Mammary epithelial cell (primary cell): ENCODE measurements at regions of chr6 and their contacts with region 1.

Region 1: DNA sequence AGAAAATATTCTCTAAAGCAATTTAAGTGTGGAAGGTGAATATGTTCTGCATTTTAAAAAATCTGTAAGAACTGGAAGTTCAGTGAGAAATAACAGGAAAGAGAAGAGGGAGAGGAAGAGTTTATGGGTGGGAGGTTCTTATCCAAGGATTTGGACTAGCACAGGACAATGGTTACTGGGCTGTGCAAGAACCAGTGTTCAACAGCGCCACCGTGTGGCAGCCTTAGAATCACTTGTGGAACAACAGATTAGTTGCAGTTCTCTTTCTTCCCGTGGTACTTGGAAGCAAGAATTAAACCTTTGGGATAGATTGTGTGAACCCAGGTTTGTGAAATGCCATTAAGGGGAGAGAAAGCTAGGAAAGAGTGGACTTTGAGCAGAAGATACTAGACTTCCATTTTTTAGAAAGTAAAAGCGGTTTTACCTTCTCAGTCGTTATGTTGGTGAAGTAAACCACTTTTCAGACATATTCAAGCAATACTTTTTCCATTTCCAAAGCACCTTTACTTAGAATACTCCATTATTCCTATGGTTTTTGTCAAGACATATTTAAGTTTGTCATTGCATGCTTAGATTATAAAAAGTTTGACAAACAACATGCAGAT is 436.7 kb downstream of the RNF144B start:
- DNase-seq: peak; percentile 28
- H3K4me3 ChIP-seq: no peak overlapping the region
- H3K27ac ChIP-seq: no peak overlapping the region
- H3K4me1 ChIP-seq: no peaks in the 10 kb centered on the region
- H3K27me3 ChIP-seq: no peaks in the 10 kb centered on the region
- CTCF ChIP-seq: peak; percentile 63 to 67

Region 2: DNA sequence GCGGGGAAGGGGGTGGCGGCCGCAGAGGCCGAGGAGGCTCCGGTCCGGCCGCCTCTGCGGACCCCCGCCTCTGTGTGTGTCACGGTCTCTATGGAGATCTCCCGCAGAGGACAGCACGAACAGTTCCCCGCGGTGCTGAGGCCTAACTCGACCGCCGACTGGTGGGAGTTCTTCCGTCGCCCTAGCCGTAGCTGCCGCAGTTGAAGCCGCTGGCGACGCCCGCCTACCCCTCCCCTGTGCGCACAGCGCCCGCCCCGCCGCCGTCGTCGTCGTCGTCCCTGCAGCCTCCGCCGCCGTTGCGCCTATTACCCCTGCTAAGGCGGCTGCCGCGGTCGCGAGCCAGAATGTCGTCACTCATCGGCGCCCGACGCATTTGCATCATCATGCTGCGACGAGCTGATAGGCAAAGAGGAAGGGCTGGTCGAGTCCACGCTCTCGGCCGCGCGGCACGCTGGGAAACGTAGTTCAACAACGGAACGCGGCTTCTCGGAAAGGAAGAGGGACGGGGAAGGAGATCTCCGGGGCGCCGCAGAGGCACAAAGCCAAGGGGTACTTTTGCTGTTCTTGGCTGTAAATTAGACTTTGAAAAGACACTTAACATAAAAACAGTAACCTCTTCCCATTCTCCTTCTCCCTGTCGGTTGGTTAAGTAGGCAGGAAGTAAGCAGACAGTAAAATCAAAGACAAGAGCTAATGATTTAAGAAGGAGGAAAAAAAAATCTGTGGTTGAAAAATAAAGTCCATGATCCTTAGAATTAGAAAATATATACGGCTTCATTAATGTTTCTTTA is 1117.1 kb before region 1 on chr6 and contains the start of gene NUP153:
- CTCF ChIA-PET with region 1: no interaction called
- dilution Hi-C with region 1: no loop called
- in situ Hi-C with region 1: no loop called
- intact Hi-C with region 1: no loop called
- DNase-seq: peak; percentile 98
- H3K4me3 ChIP-seq: peak within 1 kb of the TSS; percentile 91 to 96 (median 92)
- H3K27ac ChIP-seq: peak within 1 kb of the TSS; percentile 96
- H3K4me1 ChIP-seq: peaks cover 27% of the 10 kb centered on the region
- H3K27me3 ChIP-seq: no peaks in the 10 kb centered on the region
- CTCF ChIP-seq: no peak
- total RNA-seq, gene NUP153: 32.3 to 34.8 TPM

Region 3: GRCh38 chr6:18527836-18528743 is 295.8 kb before region 1 on chr6:
- CTCF ChIA-PET with region 1: no interaction called
- dilution Hi-C with region 1: no loop called
- in situ Hi-C with region 1: no loop called
- intact Hi-C with region 1: loop called (anchors 5 kb)
- DNase-seq: no peak
- H3K4me3 ChIP-seq: no peak overlapping the region
- H3K27ac ChIP-seq: no peak overlapping the region
- H3K4me1 ChIP-seq: no peaks in the 10 kb centered on the region
- H3K27me3 ChIP-seq: peaks cover 2% of the 10 kb centered on the region
- CTCF ChIP-seq: peak; percentile 30 to 46

Region 4: GRCh38 chr6:18784794-18785193 is 39.1 kb before region 1 on chr6:
- CTCF ChIA-PET with region 1: no interaction called
- dilution Hi-C with region 1: loop called (anchors 10 kb)
- in situ Hi-C with region 1: no loop called
- intact Hi-C with region 1: no loop called
- DNase-seq: no peak
- H3K4me3 ChIP-seq: no peak overlapping the region
- H3K27ac ChIP-seq: no peak overlapping the region
- H3K4me1 ChIP-seq: no peaks in the 10 kb centered on the region
- H3K27me3 ChIP-seq: no peaks in the 10 kb centered on the region
- CTCF ChIP-seq: no peak

Region 5: DNA sequence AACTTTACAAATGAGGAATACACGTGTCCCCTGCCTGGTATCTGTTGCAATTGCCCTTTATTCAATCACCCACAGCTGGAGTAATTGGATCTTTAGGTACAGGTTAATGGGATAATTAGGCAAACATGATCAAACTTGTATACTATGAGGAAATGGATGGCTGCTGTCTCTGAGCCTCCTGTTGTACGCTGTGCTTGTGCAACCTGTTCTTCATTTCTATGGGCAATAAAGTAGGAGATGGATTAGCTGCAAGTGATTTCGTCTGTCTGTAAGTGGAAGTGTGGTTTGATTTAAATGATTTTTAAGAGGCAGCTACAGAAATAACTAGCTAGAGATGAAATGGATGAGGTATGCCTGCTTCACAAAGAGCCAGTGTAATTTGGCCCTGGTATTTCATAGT is 37.3 kb after region 1 on chr6:
- CTCF ChIA-PET with region 1: no interaction called
- dilution Hi-C with region 1: loop called (anchors 5 kb)
- in situ Hi-C with region 1: no loop called
- intact Hi-C with region 1: no loop called
- DNase-seq: peak; percentile 2
- H3K4me3 ChIP-seq: no peak overlapping the region
- H3K27ac ChIP-seq: no peak overlapping the region
- H3K4me1 ChIP-seq: no peaks in the 10 kb centered on the region
- H3K27me3 ChIP-seq: no peaks in the 10 kb centered on the region
- CTCF ChIP-seq: no peak